Naive thymus-derived CD4-positive, alpha-beta T cell (primary cell): ENCODE measurements at regions of chr6 and their contacts with region 1.

Region 1: DNA sequence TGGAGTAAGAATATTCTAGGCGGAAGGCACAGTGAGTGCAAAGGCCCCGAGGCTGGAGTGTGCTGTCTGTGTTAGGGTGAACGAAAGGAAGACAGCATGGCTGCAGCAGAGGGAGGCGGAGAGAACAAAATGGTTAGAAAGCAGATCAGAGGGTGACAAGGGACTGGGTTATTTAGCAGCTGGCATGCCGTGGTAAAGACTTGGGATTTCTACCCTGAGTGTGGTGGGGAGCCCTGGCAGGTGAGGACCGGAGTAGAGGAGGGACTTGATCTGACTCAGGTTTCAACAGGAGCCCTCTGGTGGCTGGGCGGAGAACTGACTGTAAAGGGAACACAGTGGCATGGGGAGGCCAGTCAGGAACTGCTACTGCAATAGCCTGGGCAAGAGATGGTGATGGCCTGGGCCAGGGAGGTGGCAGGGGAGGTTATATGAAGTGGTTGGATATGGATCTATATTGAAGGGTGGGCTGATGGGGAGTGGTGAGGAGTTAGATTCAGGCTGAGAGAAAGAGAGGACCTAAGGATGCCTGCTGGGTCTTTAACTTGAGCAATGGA is 38.0 kb downstream of the PIM1 start:
- DNase-seq: peak; percentile 67 to 85 (median 82)
- ATAC-seq: peak; percentile 87
- H3K4me3 ChIP-seq: no peak overlapping the region
- H3K4me3 Mint-ChIP-seq: peak overlapping the region; percentile 4 to 77 (median 68)
- H3K27ac ChIP-seq: peak overlapping the region; percentile 23
- H3K27ac Mint-ChIP-seq: peak overlapping the region; percentile 72 to 98 (median 91)
- H3K4me1 ChIP-seq: peaks cover 36 to 39% of the 10 kb centered on the region in 2 donors
- H3K4me1 Mint-ChIP-seq: peaks cover 36 to 69% (median 64%) of the 10 kb centered on the region in 7 donors
- H3K27me3 ChIP-seq: no peaks in the 10 kb centered on the region
- H3K27me3 Mint-ChIP-seq: no peaks in the 10 kb centered on the region

Region 2: GRCh38 chr6:36765594-36766398 is 442.2 kb before region 1 on chr6:
- CTCF ChIA-PET with region 1: interaction called, 13 read pairs
- POLR2A ChIA-PET with region 1: interaction called, 3 read pairs
- intact Hi-C with region 1: loop called (anchors 1 kb)
- DNase-seq: peak; percentile 66 to 83 (median 78)
- ATAC-seq: peak; percentile 94
- H3K4me3 ChIP-seq: no peak overlapping the region
- H3K4me3 Mint-ChIP-seq: peak overlapping the region in 2 of 10 donors; percentile 16 to 25
- H3K27ac ChIP-seq: no peak overlapping the region
- H3K27ac Mint-ChIP-seq: peak overlapping the region; percentile 13 to 80 (median 56)
- H3K4me1 ChIP-seq: peaks cover 21 to 33% of the 10 kb centered on the region in 2 donors
- H3K4me1 Mint-ChIP-seq: peaks cover 28 to 42% (median 32%) of the 10 kb centered on the region in 7 donors
- H3K27me3 ChIP-seq: no peaks in the 10 kb centered on the region
- H3K27me3 Mint-ChIP-seq: no peaks in the 10 kb centered on the region

Region 3: DNA sequence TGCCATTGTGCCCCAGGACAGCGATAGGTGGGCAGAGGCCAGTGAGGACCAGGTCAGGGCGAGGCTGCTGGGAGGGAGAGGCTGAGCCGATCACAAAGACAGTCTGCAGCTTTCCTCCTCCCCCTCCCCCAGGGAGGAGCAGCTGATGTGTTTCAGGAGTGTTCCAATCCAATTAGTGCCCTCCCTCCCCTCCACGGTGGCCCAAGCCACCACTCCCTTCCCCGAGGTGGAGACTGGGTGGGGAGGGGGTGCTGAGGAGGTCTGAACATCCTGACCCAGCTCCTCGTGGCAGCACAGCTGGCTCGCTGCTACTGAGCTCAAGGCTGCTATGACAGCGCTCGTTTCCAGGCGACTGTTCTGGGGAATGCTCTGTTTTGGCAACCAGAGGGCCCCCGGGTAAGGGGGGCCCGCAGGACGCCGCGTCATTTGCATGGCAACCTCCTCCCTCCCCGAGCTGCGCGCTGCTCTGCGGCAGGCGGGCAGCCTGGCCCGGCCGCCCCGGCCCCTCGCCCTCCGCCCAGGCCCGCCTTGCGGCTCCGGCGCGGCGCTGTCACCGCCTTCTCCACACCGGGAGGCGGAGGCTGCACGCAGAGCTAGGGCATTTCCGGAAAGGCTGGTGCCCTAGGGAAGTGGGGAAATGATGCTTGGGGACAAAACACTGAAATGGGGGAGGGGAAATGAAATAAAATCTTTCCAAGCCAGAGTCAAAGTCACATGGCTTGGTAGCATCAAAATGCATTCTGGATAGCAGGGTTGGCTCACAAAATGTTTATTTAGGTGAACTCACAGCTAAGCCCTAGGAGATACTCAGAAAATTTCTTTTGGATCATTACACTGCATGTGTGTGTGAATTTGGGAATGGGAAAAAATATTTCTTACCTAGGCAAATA is 105.5 kb before region 1 on chr6:
- CTCF ChIA-PET with region 1: no interaction called
- POLR2A ChIA-PET with region 1: no interaction called
- intact Hi-C with region 1: loop called in 1 of 2 experiments (anchors 2 kb)
- DNase-seq: peak; percentile 59 to 79 (median 75)
- ATAC-seq: peak; percentile 92
- H3K4me3 ChIP-seq: peak overlapping the region; percentile 47
- H3K4me3 Mint-ChIP-seq: peak overlapping the region; percentile 74 to 86 (median 80)
- H3K27ac ChIP-seq: peak overlapping the region; percentile 46
- H3K27ac Mint-ChIP-seq: peak overlapping the region; percentile 48 to 92 (median 87)
- H3K4me1 ChIP-seq: peaks cover 14 to 19% of the 10 kb centered on the region in 2 donors
- H3K4me1 Mint-ChIP-seq: peaks cover 16 to 55% (median 32%) of the 10 kb centered on the region in 7 donors
- H3K27me3 ChIP-seq: no peaks in the 10 kb centered on the region
- H3K27me3 Mint-ChIP-seq: no peaks in the 10 kb centered on the region

Region 4: DNA sequence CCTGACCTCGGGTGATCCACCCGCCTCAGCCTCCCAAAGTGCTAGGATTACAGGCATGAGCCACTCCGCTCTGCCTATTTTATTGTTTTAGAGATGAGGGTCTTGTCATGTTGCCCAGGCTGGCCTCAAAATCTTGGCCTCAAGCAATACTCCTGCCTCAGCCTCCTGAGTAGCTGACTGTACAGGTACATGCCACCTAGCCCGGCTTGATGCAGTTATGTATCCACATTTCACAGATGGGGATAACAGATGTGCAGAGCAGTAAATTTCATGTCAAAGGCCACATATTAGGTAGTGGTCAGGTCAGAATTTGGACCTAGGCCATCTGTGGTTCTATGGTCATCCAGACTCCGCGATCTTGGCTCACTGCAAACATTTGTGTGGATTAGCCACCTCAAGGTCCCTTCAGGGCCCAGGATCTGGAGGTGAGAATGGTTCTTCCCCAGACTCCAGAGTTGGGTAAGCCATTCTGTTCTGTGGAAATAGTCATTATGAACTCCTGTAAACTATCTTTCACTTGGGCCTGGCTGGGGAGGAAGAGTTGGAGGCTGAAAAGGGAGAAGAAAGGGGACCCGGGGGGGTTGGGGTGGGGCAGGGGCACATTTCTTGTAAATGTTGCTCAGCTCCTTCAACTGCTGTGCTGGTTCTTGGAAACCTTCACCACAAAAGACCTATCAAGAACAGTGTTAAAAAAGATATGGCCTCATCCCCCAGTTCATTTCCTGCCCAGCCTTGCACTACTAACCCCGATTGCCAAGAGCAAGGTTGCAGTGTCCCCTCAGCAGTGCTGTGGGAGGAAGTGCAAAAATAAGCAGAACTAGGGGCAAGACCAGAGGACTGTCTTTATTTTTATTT is 25.0 kb before region 1 on chr6:
- CTCF ChIA-PET with region 1: interaction called, 41 read pairs
- POLR2A ChIA-PET with region 1: interaction called, 89 read pairs
- intact Hi-C with region 1: loop called (anchors 1 to 2 kb)
- DNase-seq: peak in 8 of 9 donors; percentile 56 to 85 (median 70)
- ATAC-seq: peak; percentile 97
- H3K4me3 ChIP-seq: peak overlapping the region; percentile 41
- H3K4me3 Mint-ChIP-seq: peak overlapping the region; percentile 62 to 86 (median 72)
- H3K27ac ChIP-seq: peak overlapping the region; percentile 73
- H3K27ac Mint-ChIP-seq: peak overlapping the region; percentile 88 to 98 (median 94)
- H3K4me1 ChIP-seq: peaks cover 44 to 61% of the 10 kb centered on the region in 2 donors
- H3K4me1 Mint-ChIP-seq: peaks cover 21 to 72% (median 63%) of the 10 kb centered on the region in 7 donors
- H3K27me3 ChIP-seq: no peaks in the 10 kb centered on the region
- H3K27me3 Mint-ChIP-seq: no peaks in the 10 kb centered on the region

Region 5: GRCh38 chr6:37314487-37315156 is 106.6 kb after region 1 on chr6:
- CTCF ChIA-PET with region 1: no interaction called
- POLR2A ChIA-PET with region 1: no interaction called
- intact Hi-C with region 1: loop called in 1 of 2 experiments (anchors 2 kb)
- DNase-seq: peak in 6 of 9 donors; percentile 2 to 40 (median 20)
- ATAC-seq: peak; percentile 72
- H3K4me3 ChIP-seq: no peak overlapping the region
- H3K4me3 Mint-ChIP-seq: no peak overlapping the region
- H3K27ac ChIP-seq: no peak overlapping the region
- H3K27ac Mint-ChIP-seq: peak overlapping the region in 4 of 9 donors; percentile 0 to 68 (median 16)
- H3K4me1 ChIP-seq: no peaks in the 10 kb centered on the region
- H3K4me1 Mint-ChIP-seq: peaks cover 0 to 25% (median under 1%) of the 10 kb centered on the region in 7 donors
- H3K27me3 ChIP-seq: no peaks in the 10 kb centered on the region
- H3K27me3 Mint-ChIP-seq: no peaks in the 10 kb centered on the region

Region 6: DNA sequence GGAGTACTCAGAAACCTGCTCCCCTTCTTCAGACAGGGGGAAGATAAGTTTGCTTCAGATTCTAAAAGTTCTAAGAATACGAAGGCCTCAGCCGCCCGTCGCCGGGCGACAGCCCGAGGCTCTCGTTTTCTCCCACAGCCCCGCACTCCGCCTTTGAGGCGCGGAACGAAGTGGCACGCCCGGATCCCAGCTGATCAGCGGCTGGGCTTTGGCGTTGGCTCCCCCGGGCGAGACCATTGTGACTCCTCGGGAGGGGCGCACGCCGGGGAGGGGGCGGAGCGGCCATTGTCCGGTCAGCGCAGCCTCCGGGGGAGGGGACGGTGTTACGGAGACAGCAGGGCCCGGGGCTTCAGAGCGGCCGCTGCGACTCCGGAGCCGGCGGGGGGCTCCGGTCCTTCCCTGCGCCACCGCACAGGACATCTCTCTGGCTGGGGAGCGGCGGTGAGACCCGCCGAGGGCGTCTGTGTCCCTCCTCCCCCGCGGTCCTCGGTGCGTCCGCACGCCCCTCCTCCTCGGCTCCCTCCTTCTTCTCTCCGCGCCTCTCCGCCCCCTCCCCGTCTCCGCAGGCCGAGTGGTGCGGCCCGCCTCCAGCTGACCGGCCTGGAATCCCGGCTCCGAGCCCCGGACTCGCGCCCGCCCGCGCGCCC is 611.3 kb after region 1 on chr6 and contains the start of gene ZFAND3:
- CTCF ChIA-PET with region 1: no interaction called
- POLR2A ChIA-PET with region 1: no interaction called
- intact Hi-C with region 1: no loop called
- DNase-seq: peak; percentile 87 to 96 (median 95)
- ATAC-seq: peak; percentile 90
- H3K4me3 ChIP-seq: peak within 1 kb of the TSS; percentile 85
- H3K4me3 Mint-ChIP-seq: peak within 1 kb of the TSS; percentile 90 to 100 (median 96)
- H3K27ac ChIP-seq: peak within 1 kb of the TSS; percentile 93
- H3K27ac Mint-ChIP-seq: peak within 1 kb of the TSS; percentile 94 to 99 (median 98)
- H3K4me1 ChIP-seq: peaks cover 30 to 31% of the 10 kb centered on the region in 2 donors
- H3K4me1 Mint-ChIP-seq: peaks cover 39 to 66% (median 55%) of the 10 kb centered on the region in 7 donors
- H3K27me3 ChIP-seq: no peaks in the 10 kb centered on the region
- H3K27me3 Mint-ChIP-seq: peaks cover 0 to 29% (median 0%) of the 10 kb centered on the region in 5 donors
- total RNA-seq, gene ZFAND3: 31.7 to 55.0 (median 42.5) TPM

Region 7: GRCh38 chr6:38588631-38589366 is 1380.8 kb after region 1 on chr6:
- CTCF ChIA-PET with region 1: no interaction called
- POLR2A ChIA-PET with region 1: no interaction called
- intact Hi-C with region 1: no loop called
- DNase-seq: no peak
- ATAC-seq: no peak
- H3K4me3 ChIP-seq: no peak overlapping the region
- H3K4me3 Mint-ChIP-seq: no peak overlapping the region
- H3K27ac ChIP-seq: no peak overlapping the region
- H3K27ac Mint-ChIP-seq: no peak overlapping the region
- H3K4me1 ChIP-seq: no peaks in the 10 kb centered on the region
- H3K4me1 Mint-ChIP-seq: peaks cover 0 to 5% (median 0%) of the 10 kb centered on the region in 7 donors
- H3K27me3 ChIP-seq: no peaks in the 10 kb centered on the region
- H3K27me3 Mint-ChIP-seq: no peaks in the 10 kb centered on the region